Stomach (tissue), 19 donors: ENCODE measurements at regions of chr3 and their contacts with region 1.

Region 1: DNA sequence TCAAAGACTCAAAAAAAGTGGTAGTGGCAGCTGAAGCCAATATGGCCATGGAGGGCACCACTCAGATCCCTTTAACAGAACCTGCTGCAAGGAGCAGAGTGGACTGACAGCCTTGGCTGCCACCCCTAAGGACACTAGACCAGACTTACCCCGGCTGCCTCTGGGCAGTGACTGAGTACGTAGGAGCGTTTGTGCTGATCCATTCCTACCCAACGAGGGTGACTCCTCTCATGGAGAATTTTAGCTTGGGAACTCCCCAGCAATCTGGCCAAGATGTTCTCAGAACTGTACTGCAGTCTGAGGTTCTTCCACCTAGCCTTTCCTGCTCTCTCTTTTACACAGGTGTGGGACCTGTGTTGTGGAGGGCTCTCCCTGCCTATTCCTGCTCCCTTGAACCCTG is 22.1 kb downstream of the CLEC3B start:
- DNase-seq: no peak
- H3K4me3 ChIP-seq: no peak overlapping the region
- H3K27ac ChIP-seq: no peak overlapping the region
- H3K4me1 ChIP-seq: peaks cover 0 to 7% (median 2%) of the 10 kb centered on the region in 4 donors
- H3K27me3 ChIP-seq: no peaks in the 10 kb centered on the region
- CTCF ChIP-seq: no peak
- EP300 ChIP-seq: no peak
- POLR2A ChIP-seq: no peak

Region 2: GRCh38 chr3:43087249-43087776 is 1960.9 kb before region 1 on chr3:
- intact Hi-C with region 1: no loop called
- DNase-seq: peak in 1 of 2 donors; percentile 18
- H3K4me3 ChIP-seq: no peak overlapping the region
- H3K27ac ChIP-seq: no peak overlapping the region
- H3K4me1 ChIP-seq: peaks cover 0 to 21% (median 11%) of the 10 kb centered on the region in 4 donors
- H3K27me3 ChIP-seq: no peaks in the 10 kb centered on the region
- CTCF ChIP-seq: no peak
- EP300 ChIP-seq: no peak
- POLR2A ChIP-seq: no peak

Region 3: DNA sequence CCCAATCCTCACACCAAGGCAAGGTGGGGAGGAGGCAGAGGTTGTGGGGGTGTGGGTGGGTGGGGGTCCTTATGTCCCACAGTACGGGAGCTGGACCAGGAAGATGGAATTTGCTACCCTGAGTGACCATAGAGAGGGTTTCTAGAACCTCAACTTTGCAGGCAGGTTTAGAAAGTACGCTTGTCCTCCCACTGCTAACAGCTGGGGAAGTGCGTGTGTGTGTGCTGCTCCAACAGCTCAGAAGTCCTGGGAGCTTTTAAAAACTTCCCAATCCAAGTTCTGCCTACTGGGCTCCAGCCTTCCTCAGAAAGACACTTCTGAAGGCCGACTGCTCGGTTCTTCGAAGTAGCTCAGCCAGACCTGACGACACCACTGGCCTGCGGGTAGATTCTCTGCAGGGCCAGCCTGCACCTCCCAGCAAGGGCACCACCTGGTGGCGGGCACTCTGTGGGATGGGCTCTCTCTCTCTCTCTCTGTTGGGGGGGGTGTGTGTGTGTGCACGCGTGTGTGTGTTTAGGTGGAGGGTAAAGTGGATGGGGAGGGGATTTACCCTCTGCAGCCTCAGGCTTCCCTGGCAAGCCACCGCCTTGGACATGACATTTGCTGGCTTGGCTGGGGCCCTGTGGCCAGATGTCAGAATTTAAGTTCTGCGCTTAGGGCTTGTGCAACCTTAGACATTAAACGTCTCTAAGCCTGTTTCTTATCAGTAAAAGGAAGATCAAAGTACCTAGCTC is 162.2 kb after region 1 on chr3:
- intact Hi-C with region 1: loop called (anchors 5 kb)
- DNase-seq: peak; percentile 90
- H3K4me3 ChIP-seq: no peak overlapping the region
- H3K27ac ChIP-seq: peak overlapping the region in 3 of 5 donors; percentile 20 to 29 (median 20)
- H3K4me1 ChIP-seq: peaks cover 0 to 25% (median 18%) of the 10 kb centered on the region in 4 donors
- H3K27me3 ChIP-seq: no peaks in the 10 kb centered on the region
- CTCF ChIP-seq: peak in 6 of 7 experiments; percentile 19 to 98 (median 77)
- EP300 ChIP-seq: no peak
- POLR2A ChIP-seq: no peak